ENCODE measurements at regions of chr3 and their contacts with region 1.

Region 1: GRCh38 chr3:34568766-34569165 is 770.3 kb downstream of the PDCD6IP start:
- DNase-seq: no peak
- H3K4me3 Mint-ChIP-seq: no peak overlapping the region
- H3K27ac Mint-ChIP-seq: no peak overlapping the region
- H3K4me1 Mint-ChIP-seq: no peaks in the 10 kb centered on the region
- H3K27me3 Mint-ChIP-seq: no peaks in the 10 kb centered on the region

Region 2: DNA sequence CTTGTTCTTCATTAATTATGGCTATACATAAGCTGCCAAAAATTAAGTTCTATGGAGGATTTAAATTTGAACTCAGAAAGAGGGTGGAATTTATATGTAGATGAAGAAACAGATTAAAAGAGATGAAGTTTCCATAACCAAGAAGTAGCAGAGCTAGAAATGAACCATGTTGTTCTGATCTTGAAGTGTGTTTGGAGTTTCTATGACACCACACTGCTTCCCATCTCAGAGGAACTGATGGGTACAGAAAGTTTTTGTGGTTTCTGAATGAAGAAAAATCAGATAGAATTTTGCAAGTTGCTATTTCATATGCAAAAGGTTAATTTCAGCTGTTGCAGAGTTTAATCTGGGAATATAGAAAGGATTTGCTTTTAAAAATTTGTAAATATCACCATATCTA is 60.0 kb before region 1 on chr3:
- CTCF ChIA-PET with region 1: no interaction called
- POLR2A ChIA-PET with region 1: no interaction called
- intact Hi-C with region 1: loop called (anchors 2 kb)
- DNase-seq: no peak
- H3K4me3 Mint-ChIP-seq: no peak overlapping the region
- H3K27ac Mint-ChIP-seq: no peak overlapping the region
- H3K4me1 Mint-ChIP-seq: no peaks in the 10 kb centered on the region
- H3K27me3 Mint-ChIP-seq: peaks cover 2% of the 10 kb centered on the region

Region 3: DNA sequence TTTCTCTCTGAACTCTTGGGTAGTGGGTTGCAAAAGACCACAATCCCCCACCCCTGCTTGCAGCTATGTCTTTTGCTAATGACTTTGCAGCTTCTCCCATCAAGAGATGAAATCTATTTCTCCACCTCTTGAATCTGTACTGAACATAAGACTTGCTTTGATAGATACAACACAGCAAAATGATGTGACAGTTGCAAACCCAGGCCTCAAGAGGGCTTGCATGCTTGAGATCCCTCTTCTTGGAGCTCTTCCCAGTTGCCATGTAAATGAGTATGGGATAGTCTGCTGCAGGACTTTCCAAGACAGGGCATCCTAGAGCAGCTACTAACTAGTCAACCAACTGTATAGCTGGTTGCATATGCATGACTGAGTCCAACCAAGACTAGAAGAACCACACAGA is 13.3 kb after region 1 on chr3:
- CTCF ChIA-PET with region 1: no interaction called
- POLR2A ChIA-PET with region 1: no interaction called
- intact Hi-C with region 1: no loop called
- DNase-seq: no peak
- H3K4me3 Mint-ChIP-seq: no peak overlapping the region
- H3K27ac Mint-ChIP-seq: no peak overlapping the region
- H3K4me1 Mint-ChIP-seq: no peaks in the 10 kb centered on the region
- H3K27me3 Mint-ChIP-seq: no peaks in the 10 kb centered on the region